Natural killer cell (primary cell): ENCODE measurements at regions of chr14 and their contacts with region 1.

Region 1: DNA sequence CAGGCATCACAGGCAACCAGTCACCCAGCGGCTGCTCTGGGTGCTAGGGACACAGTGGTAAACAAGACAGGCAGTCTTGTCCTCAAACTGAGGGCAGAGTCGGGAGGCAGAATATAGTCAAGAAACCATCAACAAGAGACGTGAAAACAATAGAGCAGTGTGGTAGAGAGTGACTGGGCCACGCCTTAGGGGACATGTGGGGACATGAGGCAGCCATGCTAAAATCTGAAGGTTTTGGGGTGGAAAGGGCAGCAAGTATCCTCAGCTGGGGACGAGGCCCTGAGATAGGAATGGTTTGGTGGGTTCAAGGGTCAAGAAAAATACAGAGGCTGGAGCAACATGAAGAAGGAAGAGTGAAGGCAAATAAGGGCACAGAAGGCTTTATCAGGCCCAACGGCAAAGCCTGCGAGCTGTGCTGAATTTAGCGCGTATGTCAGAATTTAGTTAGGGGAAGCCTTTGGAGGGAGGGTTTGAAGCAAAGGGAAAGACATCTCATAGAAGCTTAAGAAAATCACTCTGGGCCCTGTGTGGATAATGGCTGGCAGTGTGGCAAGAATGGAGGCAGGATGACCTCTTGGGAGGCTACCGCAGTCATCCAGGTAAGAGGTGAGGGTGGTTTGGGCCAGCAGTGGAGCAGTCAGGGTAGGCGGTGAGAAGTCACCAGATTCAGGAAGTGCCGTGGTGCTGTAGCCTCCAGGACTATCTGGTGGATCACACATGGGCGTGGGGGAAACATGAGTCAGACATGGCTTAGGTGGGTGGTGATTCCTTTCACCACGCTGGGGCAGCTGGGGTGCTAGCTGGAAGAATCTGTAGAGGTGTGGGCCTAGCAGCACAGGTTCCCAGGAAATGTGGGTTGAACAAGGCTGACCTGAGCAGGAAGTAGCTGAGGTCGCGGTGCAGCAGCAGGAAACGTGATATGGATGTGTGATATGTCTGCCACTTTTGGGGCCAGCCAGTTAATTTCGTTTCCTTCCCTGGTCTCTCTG is 3.0 kb downstream of the EVL start:
- DNase-seq: peak; percentile 85 to 96
- ATAC-seq: peak; percentile 53 to 76 (median 65)
- H3K4me3 ChIP-seq: peak overlapping the region; percentile 78
- H3K4me3 Mint-ChIP-seq: peak overlapping the region; percentile 90
- H3K27ac ChIP-seq: peak overlapping the region; percentile 89
- H3K27ac Mint-ChIP-seq: peak overlapping the region; percentile 93
- H3K4me1 ChIP-seq: peaks cover 76% of the 10 kb centered on the region
- H3K4me1 Mint-ChIP-seq: peaks cover 92 to 95% of the 10 kb centered on the region in 2 donors
- H3K27me3 ChIP-seq: no peaks in the 10 kb centered on the region
- H3K27me3 Mint-ChIP-seq: no peaks in the 10 kb centered on the region
- CTCF ChIP-seq: no peak

Region 2: DNA sequence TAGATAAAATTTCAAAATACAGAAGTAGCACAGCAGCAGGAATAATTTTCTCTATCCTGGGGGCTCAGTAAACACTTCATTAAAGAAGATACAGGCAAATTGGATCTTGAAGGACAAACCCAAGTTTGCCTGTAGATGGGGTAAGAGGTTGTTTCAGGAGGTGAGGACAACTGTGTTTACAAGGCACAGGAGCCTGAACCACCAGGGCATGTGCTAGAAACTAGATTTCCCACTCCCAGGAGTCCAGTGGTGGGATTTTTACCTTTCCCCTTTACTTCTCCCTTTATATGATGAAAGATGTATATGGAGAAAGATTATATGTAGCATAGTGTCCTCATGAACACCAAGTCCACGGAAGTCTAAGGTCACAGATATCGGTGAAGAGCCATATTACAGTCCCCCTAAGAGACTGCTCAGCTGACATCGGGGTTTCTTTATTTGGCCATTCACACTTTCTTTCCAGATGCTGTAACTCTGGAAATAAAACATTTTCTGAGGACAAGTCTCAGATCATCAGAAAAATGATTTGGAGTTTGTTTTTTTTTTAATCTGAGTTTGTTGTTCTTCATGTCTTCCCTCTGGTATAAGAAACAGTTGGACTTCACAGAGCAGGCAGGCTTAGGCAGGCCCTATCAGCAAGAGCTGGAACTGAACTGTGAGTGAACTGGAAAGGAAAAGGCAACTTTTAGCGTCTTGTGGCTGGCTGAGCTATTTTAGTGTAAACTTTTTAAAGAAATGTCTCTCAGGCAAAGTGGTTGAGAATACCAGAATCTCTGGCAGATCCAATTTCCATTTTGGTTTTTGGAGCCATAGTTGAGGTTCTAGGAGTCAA is 11.1 kb before region 1 on chr14:
- intact Hi-C with region 1: loop called (anchors 1 kb)
- DNase-seq: peak in 1 of 2 donors; percentile 83
- ATAC-seq: peak; percentile 75 to 91 (median 88)
- H3K4me3 ChIP-seq: no peak overlapping the region
- H3K4me3 Mint-ChIP-seq: no peak overlapping the region
- H3K27ac ChIP-seq: no peak overlapping the region
- H3K27ac Mint-ChIP-seq: peak overlapping the region; percentile 84 to 93
- H3K4me1 ChIP-seq: peaks cover 38% of the 10 kb centered on the region
- H3K4me1 Mint-ChIP-seq: peaks cover 54 to 60% of the 10 kb centered on the region in 2 donors
- H3K27me3 ChIP-seq: no peaks in the 10 kb centered on the region
- H3K27me3 Mint-ChIP-seq: no peaks in the 10 kb centered on the region
- CTCF ChIP-seq: peak; percentile 74